GM18951 (cell line): ENCODE measurements at regions of chr12 and their contacts with region 1.

Region 1: GRCh38 chr12:89040146-89040964 is 311.9 kb downstream of the DUSP6 start:
- POLR2A ChIP-seq: no peak

Region 2: DNA sequence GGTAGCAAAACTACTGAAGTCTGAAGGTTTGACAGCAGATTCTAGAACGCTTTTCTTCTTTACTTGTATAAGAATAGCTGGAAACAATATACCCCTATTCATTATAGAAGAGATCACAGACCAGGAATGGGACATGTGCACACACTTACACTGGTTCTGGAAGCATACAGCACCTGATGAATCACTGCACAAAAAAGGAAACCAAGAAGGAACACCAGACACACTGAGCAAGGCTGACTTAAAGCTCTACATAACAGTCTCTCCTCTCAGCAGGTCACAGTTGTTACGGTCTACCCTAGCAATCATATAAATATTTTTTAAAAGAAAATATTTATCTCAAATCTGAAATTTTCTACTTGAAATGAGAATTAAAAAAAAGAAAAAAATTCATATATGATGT is 654.7 kb after region 1 on chr12:
- in situ Hi-C with region 1: loop called (anchors 25 kb)
- POLR2A ChIP-seq: no peak